Activated T-helper 2 cell treated with anti-CD3 and anti-CD28 coated beads, Interferon-gamma antibody, Interleukin-2, Interleukin-4, amounts not matched to agents 10 μg/mL and 5 μg/mL and 100 μg/mL, durations not matched to agents 14 hours and 24 hours and 36 hours (primary cell): ENCODE measurements at regions of chr6 and their contacts with region 1.

Region 1: DNA sequence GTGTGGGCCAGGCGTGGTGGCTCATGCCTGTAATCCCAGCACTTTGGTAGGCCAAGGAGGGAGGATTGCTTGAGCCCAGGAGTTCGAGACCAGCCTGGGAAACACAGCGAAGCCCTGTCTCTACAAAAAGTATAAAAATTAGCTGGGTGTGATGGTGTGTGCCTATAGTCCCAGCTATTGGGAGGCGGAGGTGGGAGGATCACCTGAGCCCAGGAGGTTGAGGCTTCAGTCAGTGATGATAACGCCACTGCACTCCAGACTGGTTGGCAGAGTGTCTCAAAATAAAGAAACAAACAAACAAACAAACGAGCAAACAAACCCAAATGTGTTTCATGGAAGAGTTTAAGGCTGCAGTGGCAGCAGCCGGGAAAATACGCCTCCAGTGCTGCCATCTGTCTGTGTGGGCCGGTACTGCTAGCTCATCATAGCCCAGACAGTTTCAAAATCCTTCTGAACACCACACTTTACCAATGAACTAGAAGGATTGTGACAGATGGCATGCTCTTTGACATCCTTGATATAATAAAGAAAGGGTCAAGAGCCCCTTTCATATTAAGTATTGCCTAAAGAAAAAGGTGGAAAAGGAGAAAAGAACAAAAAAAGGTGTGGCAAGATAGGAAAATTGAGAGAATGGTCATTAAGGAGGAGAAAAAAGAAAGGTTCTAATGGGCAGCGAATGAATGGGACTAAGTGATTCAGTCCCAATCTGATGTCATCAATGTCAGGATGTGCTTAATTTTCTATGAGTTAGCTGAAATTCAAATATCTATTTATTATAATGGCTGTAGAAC is 298.6 kb downstream of the SYNE1 start:
- DNase-seq: no peak
- H3K4me3 Mint-ChIP-seq: no peak overlapping the region
- H3K27ac Mint-ChIP-seq: no peak overlapping the region
- H3K4me1 Mint-ChIP-seq: peaks cover 10% of the 10 kb centered on the region
- H3K27me3 Mint-ChIP-seq: peaks cover 10% of the 10 kb centered on the region

Region 2: GRCh38 chr6:151765444-151765886 is 573.1 kb before region 1 on chr6:
- intact Hi-C with region 1: loop called (anchors 10 kb)
- DNase-seq: no peak
- H3K4me3 Mint-ChIP-seq: no peak overlapping the region
- H3K27ac Mint-ChIP-seq: no peak overlapping the region
- H3K4me1 Mint-ChIP-seq: peaks cover 22% of the 10 kb centered on the region
- H3K27me3 Mint-ChIP-seq: peaks cover 13% of the 10 kb centered on the region

Region 3: DNA sequence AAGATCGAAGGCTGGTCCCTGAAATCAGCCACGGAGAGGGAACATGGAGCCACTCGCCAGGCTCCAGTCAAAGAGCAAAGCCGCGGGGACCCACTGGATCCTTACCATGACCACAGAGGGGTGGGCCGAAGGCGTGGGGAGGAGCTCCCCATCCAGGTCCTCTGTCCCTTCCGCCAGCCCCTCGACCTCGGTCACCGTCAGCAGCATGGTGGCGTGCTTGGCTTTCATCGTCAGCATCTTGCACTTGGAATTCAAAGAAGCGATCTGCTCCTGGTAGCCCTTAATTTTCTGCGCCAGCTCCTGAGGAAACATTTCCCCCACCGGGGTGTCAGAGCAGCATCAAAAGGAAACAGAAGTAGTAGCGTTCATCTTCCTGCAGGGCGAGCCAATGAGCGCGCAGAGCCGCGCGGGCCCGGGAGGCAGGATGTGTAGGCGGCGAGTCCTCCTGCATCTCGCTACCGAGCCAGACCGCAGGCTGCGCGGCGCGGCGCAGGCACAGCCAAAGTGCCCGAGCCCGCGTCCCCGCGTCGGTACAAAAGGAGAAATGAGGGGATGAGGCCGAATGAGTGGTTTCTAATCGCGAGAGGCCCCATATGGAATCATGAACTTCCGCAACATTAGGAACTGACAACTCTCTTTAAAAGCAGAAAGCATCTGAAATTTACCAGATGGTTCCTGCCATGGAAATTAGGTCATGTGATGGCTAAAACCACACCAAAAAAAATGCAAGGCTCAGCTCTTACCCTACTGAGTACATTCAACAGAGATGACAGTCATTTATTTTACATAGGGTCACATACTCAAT is 36.6 kb before region 1 on chr6:
- intact Hi-C with region 1: loop called (anchors 1 kb)
- DNase-seq: peak; percentile 86
- H3K4me3 Mint-ChIP-seq: peak overlapping the region; percentile 99
- H3K27ac Mint-ChIP-seq: peak overlapping the region; percentile 99
- H3K4me1 Mint-ChIP-seq: peaks cover 22% of the 10 kb centered on the region
- H3K27me3 Mint-ChIP-seq: no peaks in the 10 kb centered on the region